ENCODE measurements at regions of chrX and their contacts with region 1.

Region 1: GRCh38 chrX:86171366-86171765 is 23.1 kb downstream of the DACH2 start:
- DNase-seq: no peak
- H3K4me3 ChIP-seq: no peak overlapping the region
- H3K27ac ChIP-seq: no peak overlapping the region
- H3K4me1 ChIP-seq: no peaks in the 10 kb centered on the region
- H3K27me3 ChIP-seq: no peaks in the 10 kb centered on the region
- CTCF ChIP-seq: no peak

Region 2: DNA sequence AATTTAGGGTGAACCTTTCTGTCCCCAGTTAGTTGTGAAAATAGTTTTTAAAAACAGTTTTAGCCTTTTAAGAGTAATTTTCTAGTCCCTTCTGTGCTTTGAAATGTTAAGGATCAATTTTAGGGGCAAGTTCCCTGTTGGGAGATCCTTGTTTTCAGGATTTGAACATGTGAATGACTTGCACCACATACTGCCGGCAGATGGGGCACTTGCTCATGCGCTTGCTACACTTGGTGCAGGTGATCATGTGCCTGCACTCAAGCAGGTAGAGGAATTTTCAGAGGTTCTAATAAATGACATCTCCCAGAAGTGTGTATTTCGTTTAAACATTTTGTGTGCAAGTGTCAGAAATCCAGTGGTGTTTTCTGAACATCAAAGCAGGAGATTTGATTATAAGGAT is 319.9 kb before region 1 on chrX:
- intact Hi-C with region 1: loop called (anchors 10 kb)
- DNase-seq: peak; percentile 25
- H3K4me3 ChIP-seq: no peak overlapping the region
- H3K27ac ChIP-seq: no peak overlapping the region
- H3K4me1 ChIP-seq: no peaks in the 10 kb centered on the region
- H3K27me3 ChIP-seq: no peaks in the 10 kb centered on the region
- CTCF ChIP-seq: no peak

Region 3: GRCh38 chrX:85922821-85923220 is 248.5 kb before region 1 on chrX:
- intact Hi-C with region 1: no loop called
- DNase-seq: no peak
- H3K4me3 ChIP-seq: no peak overlapping the region
- H3K27ac ChIP-seq: no peak overlapping the region
- H3K4me1 ChIP-seq: no peaks in the 10 kb centered on the region
- H3K27me3 ChIP-seq: no peaks in the 10 kb centered on the region
- CTCF ChIP-seq: no peak

Region 4: GRCh38 chrX:86237482-86237881 is 66.1 kb after region 1 on chrX:
- intact Hi-C with region 1: no loop called
- DNase-seq: no peak
- H3K4me3 ChIP-seq: no peak overlapping the region
- H3K27ac ChIP-seq: no peak overlapping the region
- H3K4me1 ChIP-seq: no peaks in the 10 kb centered on the region
- H3K27me3 ChIP-seq: no peaks in the 10 kb centered on the region
- CTCF ChIP-seq: no peak

Measured in colonic mucosa (tissue), 4 donors.